A549 (cell line): ENCODE measurements at regions of chr16 and their contacts with region 1.

Region 1: GRCh38 chr16:66270333-66270927 is 96.1 kb upstream of the CDH5 start:
- DNase-seq: peak; percentile 73 to 85
- ATAC-seq: peak; percentile 80 to 94
- H3K4me3 ChIP-seq: 0 out of 3 replicates have a peak overlapping the region, but pooled peaks have one; percentile 24
- H3K27ac ChIP-seq: peak overlapping the region; percentile 37 to 69; a peak in 4 of 6 replicates
- H3K4me1 ChIP-seq: 0 out of 3 replicates have a peak, but pooled peaks cover 2% of the 10 kb centered on the region
- CTCF ChIP-seq: peak; percentile 87
- EP300 ChIP-seq: no peak
- POLR2A ChIP-seq: no peak
- RAD21 ChIP-seq: peak; percentile 72 to 88

Region 2: DNA sequence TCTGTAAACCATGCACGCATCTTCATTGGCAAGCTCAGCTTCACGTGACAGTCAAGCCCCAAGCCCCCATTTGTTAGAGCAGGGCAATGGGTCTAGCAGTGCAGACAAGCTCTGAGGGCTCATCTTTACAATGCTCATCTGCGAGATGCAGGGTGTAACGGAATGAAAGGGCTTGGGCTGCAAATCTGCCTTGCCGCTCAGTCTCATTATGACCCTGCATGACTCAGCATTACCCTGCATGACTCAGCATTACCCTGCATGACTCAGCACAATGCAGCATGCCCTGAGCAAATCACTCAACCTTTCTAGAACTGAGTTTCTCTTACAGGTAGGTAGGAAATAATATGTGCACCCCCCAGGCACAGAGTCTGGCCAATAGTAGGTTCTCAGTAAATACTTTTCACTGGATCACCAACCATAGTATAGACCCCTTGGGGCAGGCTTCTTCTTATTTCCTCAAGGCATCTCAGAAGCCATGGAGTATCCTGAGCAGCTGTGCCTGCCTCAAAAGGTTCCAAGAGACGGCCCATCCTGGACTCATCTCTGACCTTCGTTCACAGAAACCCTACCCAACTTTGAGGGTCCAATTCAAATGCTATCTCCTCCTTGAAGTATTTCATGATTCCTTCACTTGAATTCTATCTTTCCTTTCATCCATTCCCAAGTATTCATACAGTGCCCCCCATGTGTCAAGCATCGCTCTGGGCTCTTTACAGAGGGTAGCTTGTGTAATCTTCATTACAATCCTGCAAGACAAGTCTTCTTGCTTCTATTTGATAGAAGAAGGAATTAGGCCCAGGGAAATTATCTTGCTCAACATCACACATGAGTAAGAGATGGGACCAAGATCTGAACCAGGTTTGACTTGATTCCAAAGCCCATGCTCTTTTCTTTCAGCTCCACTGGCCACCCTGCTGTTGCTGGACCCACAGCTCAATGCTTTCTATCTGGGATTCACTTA is 295.1 kb before region 1 on chr16:
- CTCF ChIA-PET with region 1: no interaction called
- POLR2A ChIA-PET with region 1: no interaction called
- DNase-seq: peak in 1 of 2 experiments; percentile 66
- ATAC-seq: peak in 1 of 2 experiments; percentile 44; a peak in 3 of 6 replicates
- H3K4me3 ChIP-seq: no peak overlapping the region
- H3K27ac ChIP-seq: peak overlapping the region; percentile 54 to 76; a peak in 5 of 6 replicates
- H3K4me1 ChIP-seq: no peaks in the 10 kb centered on the region
- CTCF ChIP-seq: no peak
- EP300 ChIP-seq: no peak
- POLR2A ChIP-seq: no peak
- RAD21 ChIP-seq: no peak

Region 3: DNA sequence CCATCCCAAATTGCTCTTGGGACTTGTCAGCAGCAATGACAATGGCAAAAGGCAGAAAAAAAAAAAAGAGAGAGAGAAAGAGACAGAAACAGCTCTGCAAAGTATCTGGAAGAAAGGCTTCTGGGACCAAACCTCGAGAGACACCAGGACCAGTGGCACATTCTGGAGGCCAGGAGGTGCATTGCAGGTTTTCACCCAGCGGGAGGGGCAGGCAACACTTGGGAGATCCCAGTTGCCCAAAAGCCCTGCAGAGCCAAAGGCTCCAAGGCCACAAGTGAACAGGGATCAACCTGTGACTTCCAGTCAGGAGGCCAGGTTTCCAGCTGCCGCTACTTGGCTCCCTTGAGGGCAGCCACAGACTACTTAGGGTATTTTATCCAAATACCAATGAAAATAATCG is 14.8 kb before region 1 on chr16:
- CTCF ChIA-PET with region 1: interaction called, 14 read pairs
- POLR2A ChIA-PET with region 1: no interaction called
- DNase-seq: no peak
- ATAC-seq: no peak
- H3K4me3 ChIP-seq: no peak overlapping the region
- H3K27ac ChIP-seq: no peak overlapping the region
- H3K4me1 ChIP-seq: no peaks in the 10 kb centered on the region
- CTCF ChIP-seq: no peak
- EP300 ChIP-seq: no peak
- POLR2A ChIP-seq: no peak
- RAD21 ChIP-seq: no peak

Region 4: DNA sequence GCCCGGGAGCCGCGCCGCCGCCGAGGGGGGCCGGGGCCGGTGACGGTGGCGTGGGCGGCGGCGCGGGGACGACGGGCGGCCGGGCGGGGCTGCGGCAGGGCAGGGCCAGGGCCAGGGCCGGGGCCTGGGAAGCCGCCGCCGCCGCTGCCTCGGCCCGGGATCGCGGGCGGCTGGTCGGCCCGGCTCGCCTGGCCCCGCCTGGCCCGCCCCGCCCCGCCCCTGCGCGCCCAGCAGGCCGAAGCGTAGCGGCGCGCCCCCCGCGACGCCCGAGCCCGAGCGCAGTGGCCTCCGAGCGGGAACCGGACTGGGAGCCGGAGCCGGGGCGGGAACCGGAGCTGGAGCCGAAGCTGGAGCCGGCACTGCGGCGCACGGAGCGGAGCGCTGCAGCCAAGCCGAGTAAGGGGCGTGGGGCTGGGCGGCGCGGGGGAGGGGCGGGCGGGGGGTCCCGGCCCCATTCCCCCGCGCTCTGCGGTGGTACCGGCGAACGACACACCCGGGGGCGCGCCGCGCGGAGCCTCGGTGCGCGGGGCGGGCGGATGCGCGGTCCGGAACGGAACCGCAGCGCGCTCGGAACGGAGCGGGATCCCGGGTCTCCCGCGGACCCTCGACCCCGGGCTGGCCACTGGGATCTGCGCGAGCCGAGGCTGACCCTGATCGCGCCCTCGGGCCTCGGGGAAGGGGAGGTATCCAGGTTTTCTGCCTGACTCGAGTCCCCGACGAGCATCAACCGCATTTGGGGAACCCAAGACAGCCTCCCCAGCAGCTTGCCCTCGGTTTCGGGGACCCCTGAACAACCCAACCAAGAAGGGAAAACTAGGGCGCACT is 156.8 kb after region 1 on chr16 and contains the start of gene BEAN1:
- CTCF ChIA-PET with region 1: no interaction called
- POLR2A ChIA-PET with region 1: no interaction called
- DNase-seq: peak in 1 of 2 experiments; percentile 46
- ATAC-seq: peak; percentile 47 to 69
- H3K4me3 ChIP-seq: peak within 1 kb of the TSS; percentile 88
- H3K27ac ChIP-seq: peak within 1 kb of the TSS; percentile 85 to 93
- H3K4me1 ChIP-seq: peaks cover 6% of the 10 kb centered on the region
- CTCF ChIP-seq: no peak
- EP300 ChIP-seq: no peak
- POLR2A ChIP-seq: no peak
- RAD21 ChIP-seq: no peak
- polyA plus RNA-seq, gene BEAN1: 0.98 and 1.4 TPM in 2 replicates